Colonic mucosa (tissue), 4 donors: ENCODE measurements at regions of chr11 and their contacts with region 1.

Region 1: DNA sequence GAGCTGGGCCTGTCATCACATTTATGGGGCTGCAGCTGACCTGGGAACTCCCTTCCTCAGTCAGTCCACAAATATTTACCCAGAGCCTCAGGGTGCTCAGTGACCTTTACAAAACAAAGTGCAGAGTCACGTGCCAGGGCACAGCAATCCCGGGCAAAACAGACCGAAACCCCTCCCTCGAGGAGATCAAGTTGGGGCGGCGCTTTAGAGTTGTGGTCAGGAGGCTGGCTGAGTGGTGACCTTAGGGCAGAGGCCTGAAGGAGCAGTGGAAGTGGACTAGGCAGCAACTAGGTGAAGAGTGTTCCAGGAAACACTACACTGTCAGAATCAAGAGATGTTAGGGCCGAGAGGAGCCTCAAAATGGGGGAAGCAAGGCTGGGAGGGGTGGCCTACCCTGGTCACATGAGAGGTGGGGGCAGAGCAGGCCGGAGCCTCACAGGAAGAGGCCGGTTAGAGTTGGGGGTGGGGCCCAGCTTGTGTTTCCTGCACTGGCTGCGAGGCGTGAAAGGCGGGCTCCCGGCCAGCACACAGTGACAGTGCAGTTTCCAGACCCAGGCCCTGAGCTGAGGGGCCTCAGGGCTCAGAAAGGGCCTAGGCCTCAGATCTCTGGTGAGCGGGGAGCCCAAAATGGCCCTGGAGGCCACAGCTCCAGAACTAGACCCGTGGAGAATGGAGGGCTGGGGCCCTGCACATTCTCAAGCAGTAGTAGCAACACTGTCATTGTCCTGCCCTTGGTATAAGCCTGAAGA is 3.7 kb upstream of the NEAT1 start:
- DNase-seq: peak; percentile 97
- H3K4me3 ChIP-seq: peak overlapping the region; percentile 29
- H3K27ac ChIP-seq: peak overlapping the region; percentile 100
- H3K4me1 ChIP-seq: peaks cover 10% of the 10 kb centered on the region
- H3K27me3 ChIP-seq: no peaks in the 10 kb centered on the region
- CTCF ChIP-seq: no peak

Region 2: DNA sequence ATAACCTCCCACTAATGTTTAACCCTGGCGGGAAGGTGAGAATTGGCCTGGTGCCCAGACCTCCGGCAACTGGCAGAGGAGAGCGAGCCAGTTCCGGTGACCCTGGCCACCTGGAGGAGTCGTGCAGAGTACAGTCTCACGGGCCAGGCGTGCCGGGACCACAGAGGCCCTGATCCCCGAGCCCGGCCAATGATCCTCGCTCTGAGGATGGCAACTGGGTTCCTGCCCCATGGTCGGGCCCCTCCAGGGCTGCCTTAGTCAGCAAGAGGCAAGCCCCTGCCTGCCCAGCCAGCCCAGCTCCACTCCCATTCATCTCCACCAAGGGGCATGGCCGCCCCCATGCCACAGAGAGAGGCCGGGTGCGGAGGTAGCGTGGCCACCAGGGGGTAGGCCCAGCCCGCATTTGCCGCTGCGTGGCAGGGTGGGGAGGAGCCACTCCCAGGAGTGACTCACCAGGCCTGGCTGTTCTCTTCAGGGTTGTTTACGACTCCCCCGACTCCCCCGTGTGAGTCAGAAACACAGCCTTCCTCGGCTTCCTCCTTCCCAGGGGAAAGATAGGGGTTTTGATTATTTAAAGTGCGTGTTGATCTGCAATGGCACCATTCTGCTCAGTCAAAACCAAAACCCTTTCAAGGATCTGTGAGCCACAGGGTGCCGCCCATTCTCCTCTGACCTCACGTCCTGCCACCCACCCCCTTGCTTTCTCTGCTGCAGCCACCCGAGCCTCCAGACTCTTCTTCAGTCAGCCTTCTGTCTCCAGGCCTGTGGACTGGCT is 36.7 kb before region 1 on chr11 and contains the start of gene SLC25A45:
- intact Hi-C with region 1: loop called (anchors 5 kb)
- DNase-seq: peak; percentile 93
- H3K4me3 ChIP-seq: peak within 1 kb of the TSS; percentile 29
- H3K27ac ChIP-seq: peak within 1 kb of the TSS; percentile 98
- H3K4me1 ChIP-seq: peaks cover 9% of the 10 kb centered on the region
- H3K27me3 ChIP-seq: no peaks in the 10 kb centered on the region
- CTCF ChIP-seq: peak; percentile 68
- total RNA-seq, gene SLC25A45: 4.4 to 6.9 TPM

Region 3: DNA sequence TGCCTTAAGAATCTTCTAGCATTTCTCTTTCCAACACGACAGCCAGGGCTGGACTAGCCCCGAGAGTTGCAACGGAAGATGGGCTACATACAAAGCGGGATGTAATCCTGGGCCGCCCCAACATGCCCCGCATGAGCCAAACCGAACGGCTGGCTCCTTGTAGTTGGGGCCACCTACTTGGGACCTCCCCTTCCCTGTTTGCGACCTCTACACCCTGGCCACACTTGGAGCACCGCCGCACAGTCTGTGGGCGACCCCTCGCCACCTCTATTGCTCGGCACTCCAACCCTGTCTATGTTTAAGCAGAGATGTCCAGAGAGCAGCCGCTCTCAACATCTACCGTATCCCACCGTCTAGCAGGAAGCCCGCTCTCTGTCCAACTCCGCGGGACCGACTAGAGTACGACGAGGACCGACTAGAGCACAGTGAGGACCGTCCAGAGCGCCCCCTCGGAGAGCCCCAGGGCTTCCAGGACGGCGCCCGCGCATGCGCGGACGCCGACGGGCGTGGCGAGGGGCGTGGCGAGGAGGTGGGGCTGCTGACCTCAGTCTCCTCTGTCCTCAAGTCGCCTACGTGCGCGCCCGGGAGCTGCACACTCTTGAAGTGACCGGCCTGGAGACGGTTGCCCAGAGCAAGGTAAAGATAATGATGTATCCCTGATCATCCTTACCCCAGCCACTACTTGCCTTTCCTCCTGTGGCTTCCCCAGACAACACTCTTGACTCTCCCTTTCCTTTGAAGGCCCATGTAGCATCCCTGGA is 36.0 kb after region 1 on chr11:
- intact Hi-C with region 1: loop called (anchors 10 kb)
- DNase-seq: peak; percentile 95
- H3K4me3 ChIP-seq: peak overlapping the region; percentile 50
- H3K27ac ChIP-seq: peak overlapping the region; percentile 74
- H3K4me1 ChIP-seq: no peaks in the 10 kb centered on the region
- H3K27me3 ChIP-seq: no peaks in the 10 kb centered on the region
- CTCF ChIP-seq: no peak

Region 4: GRCh38 chr11:65506770-65507505 is 88.1 kb after region 1 on chr11:
- intact Hi-C with region 1: loop called (anchors 2 kb)
- DNase-seq: peak; percentile 77
- H3K4me3 ChIP-seq: peak overlapping the region; percentile 66
- H3K27ac ChIP-seq: peak overlapping the region; percentile 99
- H3K4me1 ChIP-seq: peaks cover 2% of the 10 kb centered on the region
- H3K27me3 ChIP-seq: no peaks in the 10 kb centered on the region
- CTCF ChIP-seq: no peak

Region 5: GRCh38 chr11:65546217-65546958 is 127.5 kb after region 1 on chr11:
- intact Hi-C with region 1: no loop called
- DNase-seq: peak; percentile 99
- H3K4me3 ChIP-seq: peak overlapping the region; percentile 56
- H3K27ac ChIP-seq: peak overlapping the region; percentile 80
- H3K4me1 ChIP-seq: no peaks in the 10 kb centered on the region
- H3K27me3 ChIP-seq: no peaks in the 10 kb centered on the region
- CTCF ChIP-seq: no peak